ENCODE measurements at regions of chr2 and their contacts with region 1.

Region 1: GRCh38 chr2:201231781-201232466 is 28.4 kb upstream of the CASP8 start:
- DNase-seq: peak; percentile 81 to 97
- ATAC-seq: peak; percentile 68 to 85 (median 71)
- H3K4me3 ChIP-seq: no peak overlapping the region
- H3K4me3 Mint-ChIP-seq: peak overlapping the region; percentile 93
- H3K27ac ChIP-seq: peak overlapping the region; percentile 13
- H3K27ac Mint-ChIP-seq: peak overlapping the region; percentile 97
- H3K4me1 ChIP-seq: peaks cover 38% of the 10 kb centered on the region
- H3K4me1 Mint-ChIP-seq: peaks cover 67 to 71% of the 10 kb centered on the region in 2 donors
- H3K27me3 ChIP-seq: no peaks in the 10 kb centered on the region
- H3K27me3 Mint-ChIP-seq: no peaks in the 10 kb centered on the region
- CTCF ChIP-seq: peak; percentile 96

Region 2: DNA sequence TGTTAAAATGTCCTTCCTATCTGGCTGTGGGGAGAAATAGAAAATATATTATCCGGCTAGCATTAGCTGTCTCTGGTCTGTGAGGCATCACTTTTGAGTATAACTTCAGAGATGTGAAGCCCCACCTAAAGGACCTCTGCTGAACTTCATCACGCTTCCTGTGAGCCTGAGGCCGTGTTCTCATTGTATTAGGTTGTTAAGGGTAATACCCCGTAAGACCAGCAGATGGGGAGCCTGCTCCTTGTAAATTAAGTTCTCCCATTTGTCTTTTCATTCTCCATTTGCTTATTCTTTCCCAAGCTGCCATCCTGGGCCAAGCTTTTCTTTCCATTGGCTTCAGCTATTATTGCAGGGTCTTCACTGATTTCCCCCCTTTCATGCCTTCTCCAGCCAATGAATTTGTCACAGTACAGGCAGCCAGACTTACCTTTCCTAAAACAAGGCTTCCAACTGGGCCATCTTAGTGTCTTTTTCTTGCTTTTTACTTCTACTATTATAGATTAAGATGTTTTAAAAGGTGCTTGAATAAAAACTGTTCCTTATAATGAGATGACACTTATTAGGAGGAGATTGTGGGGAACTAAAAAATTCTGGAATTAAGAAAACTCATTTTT is 330.4 kb before region 1 on chr2:
- intact Hi-C with region 1: loop called (anchors 1 kb)
- DNase-seq: peak; percentile 55 to 91
- ATAC-seq: peak; percentile 100
- H3K4me3 ChIP-seq: no peak overlapping the region
- H3K4me3 Mint-ChIP-seq: no peak overlapping the region
- H3K27ac ChIP-seq: peak overlapping the region; percentile 34
- H3K27ac Mint-ChIP-seq: peak overlapping the region; percentile 63
- H3K4me1 ChIP-seq: no peaks in the 10 kb centered on the region
- H3K4me1 Mint-ChIP-seq: peaks cover 6 to 8% of the 10 kb centered on the region in 2 donors
- H3K27me3 ChIP-seq: no peaks in the 10 kb centered on the region
- H3K27me3 Mint-ChIP-seq: no peaks in the 10 kb centered on the region
- CTCF ChIP-seq: peak; percentile 87

Region 3: GRCh38 chr2:201116115-201116958 is 115.6 kb before region 1 on chr2 and contains the start of gene CFLAR:
- intact Hi-C with region 1: no loop called
- DNase-seq: peak; percentile 83 to 89
- ATAC-seq: peak; percentile 35 to 64 (median 48)
- H3K4me3 ChIP-seq: peak within 1 kb of the TSS; percentile 90
- H3K4me3 Mint-ChIP-seq: peak within 1 kb of the TSS; percentile 95
- H3K27ac ChIP-seq: peak within 1 kb of the TSS; percentile 93
- H3K27ac Mint-ChIP-seq: peak within 1 kb of the TSS; percentile 93 to 100
- H3K4me1 ChIP-seq: peaks cover 37% of the 10 kb centered on the region
- H3K4me1 Mint-ChIP-seq: peaks cover 59 to 66% of the 10 kb centered on the region in 2 donors
- H3K27me3 ChIP-seq: no peaks in the 10 kb centered on the region
- H3K27me3 Mint-ChIP-seq: no peaks in the 10 kb centered on the region
- CTCF ChIP-seq: no peak
- total RNA-seq, gene CFLAR: 415 to 542 (median 445) TPM

Region 4: DNA sequence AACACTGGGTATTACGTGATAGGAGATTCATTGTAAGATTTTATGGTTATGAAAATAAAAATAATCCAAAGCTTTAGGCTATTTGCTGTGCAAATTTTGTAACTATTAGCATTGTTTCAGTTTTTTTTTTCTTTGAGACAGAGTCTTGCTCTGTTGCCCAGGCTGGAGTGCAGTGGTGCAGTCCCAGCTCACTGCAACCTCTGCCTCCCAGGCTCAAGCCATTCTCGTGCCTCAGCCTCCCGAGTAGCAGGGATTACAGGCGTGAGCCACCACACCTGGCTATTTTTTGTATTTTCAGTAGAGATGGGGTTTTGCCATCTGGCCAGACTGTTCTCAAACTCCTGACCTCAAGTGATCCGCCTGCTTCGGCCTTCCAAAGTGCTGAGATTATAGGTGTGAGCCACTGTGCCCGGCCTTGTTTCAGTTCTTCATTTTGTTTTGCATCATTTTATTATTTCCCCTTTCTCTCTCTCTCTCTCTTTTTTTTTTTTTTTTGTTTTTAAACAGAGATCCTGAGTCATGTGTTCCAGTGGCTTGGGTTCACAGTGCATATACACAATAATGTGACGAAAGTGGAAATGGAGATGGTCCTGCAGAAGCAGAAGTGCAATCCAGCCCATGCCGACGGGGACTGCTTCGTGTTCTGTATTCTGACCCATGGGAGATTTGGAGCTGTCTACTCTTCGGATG is 23.2 kb before region 1 on chr2:
- intact Hi-C with region 1: loop called (anchors 2 kb)
- DNase-seq: no peak
- ATAC-seq: peak in 1 of 3 donors; percentile 23
- H3K4me3 ChIP-seq: no peak overlapping the region
- H3K4me3 Mint-ChIP-seq: no peak overlapping the region
- H3K27ac ChIP-seq: peak overlapping the region; percentile 27
- H3K27ac Mint-ChIP-seq: peak overlapping the region in 1 of 2 donors; percentile 62
- H3K4me1 ChIP-seq: peaks cover 16% of the 10 kb centered on the region
- H3K4me1 Mint-ChIP-seq: peaks cover 30 to 37% of the 10 kb centered on the region in 2 donors
- H3K27me3 ChIP-seq: no peaks in the 10 kb centered on the region
- H3K27me3 Mint-ChIP-seq: no peaks in the 10 kb centered on the region
- CTCF ChIP-seq: no peak

Region 5: GRCh38 chr2:201242571-201243277 is 10.8 kb after region 1 on chr2:
- intact Hi-C with region 1: no loop called
- DNase-seq: no peak
- ATAC-seq: no peak
- H3K4me3 ChIP-seq: no peak overlapping the region
- H3K4me3 Mint-ChIP-seq: no peak overlapping the region
- H3K27ac ChIP-seq: no peak overlapping the region
- H3K27ac Mint-ChIP-seq: peak overlapping the region in 1 of 2 donors; percentile 89
- H3K4me1 ChIP-seq: peaks cover 12% of the 10 kb centered on the region
- H3K4me1 Mint-ChIP-seq: peaks cover 21 to 26% of the 10 kb centered on the region in 2 donors
- H3K27me3 ChIP-seq: no peaks in the 10 kb centered on the region
- H3K27me3 Mint-ChIP-seq: no peaks in the 10 kb centered on the region
- CTCF ChIP-seq: no peak

Region 6: GRCh38 chr2:201275990-201276389 is 44.1 kb after region 1 on chr2:
- intact Hi-C with region 1: loop called (anchors 10 kb)
- DNase-seq: peak in 1 of 2 donors; percentile 34
- ATAC-seq: peak in 2 of 3 donors; percentile 45 to 57
- H3K4me3 ChIP-seq: no peak overlapping the region
- H3K4me3 Mint-ChIP-seq: no peak overlapping the region
- H3K27ac ChIP-seq: no peak overlapping the region
- H3K27ac Mint-ChIP-seq: peak overlapping the region; percentile 75 to 100
- H3K4me1 ChIP-seq: peaks cover 8% of the 10 kb centered on the region
- H3K4me1 Mint-ChIP-seq: peaks cover 65 to 70% of the 10 kb centered on the region in 2 donors
- H3K27me3 ChIP-seq: no peaks in the 10 kb centered on the region
- H3K27me3 Mint-ChIP-seq: no peaks in the 10 kb centered on the region
- CTCF ChIP-seq: no peak

Region 7: DNA sequence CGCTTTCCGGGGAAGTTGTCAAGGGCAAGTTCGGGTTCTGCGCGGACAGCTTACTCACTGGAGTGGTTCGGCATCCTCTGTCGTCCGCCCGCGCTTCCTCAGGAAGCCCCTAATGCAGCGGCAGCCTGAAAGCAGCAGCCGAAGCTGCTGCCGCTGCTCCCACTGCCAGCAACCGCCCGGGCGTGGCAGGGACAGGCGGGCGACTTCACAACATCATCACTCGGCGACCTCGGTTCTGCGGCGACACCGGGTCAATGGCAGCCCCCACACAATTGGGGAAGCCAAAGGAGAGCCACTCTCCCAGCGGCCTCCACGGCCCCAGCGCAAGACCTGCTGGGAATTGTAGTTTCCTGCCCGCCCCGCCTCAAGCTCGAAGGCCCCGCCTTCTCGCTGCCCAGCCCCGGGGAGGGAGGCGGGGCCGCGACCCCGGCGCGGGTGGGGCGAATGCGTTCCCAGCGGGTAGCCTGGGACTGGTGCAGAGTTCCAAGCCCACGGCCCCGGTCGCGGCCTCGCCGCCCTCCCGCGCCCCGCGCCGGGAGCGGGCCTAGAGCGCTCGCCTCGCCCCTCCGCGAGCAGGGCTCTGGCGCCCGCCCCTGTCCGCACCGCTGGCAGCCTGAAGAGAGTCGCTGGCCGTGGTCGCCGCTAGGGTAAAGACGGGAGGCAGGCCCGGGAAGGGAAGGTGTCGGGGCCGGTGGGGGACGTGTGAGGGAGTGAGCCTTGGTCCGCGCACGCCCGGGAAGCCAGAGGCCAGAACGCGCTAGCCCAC is 219.6 kb after region 1 on chr2 and contains the starts of genes STRADB and TRAK2:
- intact Hi-C with region 1: loop called (anchors 2 kb)
- DNase-seq: peak; percentile 92 to 97
- ATAC-seq: peak; percentile 93 to 98 (median 93)
- H3K4me3 ChIP-seq: peak within 1 kb of the TSS; percentile 65
- H3K4me3 Mint-ChIP-seq: peak within 1 kb of the TSS; percentile 98
- H3K27ac ChIP-seq: peak within 1 kb of the TSS; percentile 72
- H3K27ac Mint-ChIP-seq: peak within 1 kb of the TSS; percentile 95 to 99
- H3K4me1 ChIP-seq: peaks cover 10% of the 10 kb centered on the region
- H3K4me1 Mint-ChIP-seq: peaks cover 29 to 38% of the 10 kb centered on the region in 2 donors
- H3K27me3 ChIP-seq: no peaks in the 10 kb centered on the region
- H3K27me3 Mint-ChIP-seq: no peaks in the 10 kb centered on the region
- CTCF ChIP-seq: peak; percentile 18
- total RNA-seq, gene STRADB: 11.8 to 15.3 (median 14.7) TPM
- total RNA-seq, gene TRAK2: 19.2 to 29.4 (median 26.2) TPM

Measured in natural killer cell (primary cell).